Astrocyte of the cerebellum (primary cell): ENCODE measurements at regions of chr3 and their contacts with region 1.

Region 1: DNA sequence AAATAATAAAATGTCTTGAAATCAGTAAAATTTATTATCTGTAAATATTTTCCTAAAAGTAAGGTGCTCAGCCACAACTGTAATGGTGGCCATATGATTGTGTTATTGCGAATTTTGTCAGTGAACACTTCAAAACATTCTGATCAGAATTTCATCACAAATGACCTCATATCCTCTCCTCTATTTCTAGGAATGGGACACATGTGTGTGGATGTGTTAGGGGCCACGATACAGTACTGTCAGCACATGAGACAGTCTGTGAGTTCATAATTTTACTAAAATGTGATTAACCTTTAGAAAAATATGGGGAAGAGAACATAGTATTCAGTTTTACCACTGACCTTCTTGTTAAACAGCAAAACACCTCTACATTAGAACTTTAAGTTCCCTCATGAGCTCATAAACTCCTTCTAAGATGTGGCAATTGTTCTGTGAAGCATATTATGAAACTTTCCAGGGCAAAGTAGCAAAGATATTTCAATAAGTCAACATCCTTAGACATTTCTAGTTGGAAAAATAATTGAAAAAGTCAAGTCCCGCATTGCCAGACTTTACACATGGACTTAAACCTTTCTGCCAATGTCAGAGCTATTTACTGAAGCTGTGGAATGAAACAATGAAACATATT is 158.2 kb upstream of the ABI3BP start:
- DNase-seq: no peak
- H3K4me3 ChIP-seq: no peak overlapping the region
- CTCF ChIP-seq: no peak

Region 2: DNA sequence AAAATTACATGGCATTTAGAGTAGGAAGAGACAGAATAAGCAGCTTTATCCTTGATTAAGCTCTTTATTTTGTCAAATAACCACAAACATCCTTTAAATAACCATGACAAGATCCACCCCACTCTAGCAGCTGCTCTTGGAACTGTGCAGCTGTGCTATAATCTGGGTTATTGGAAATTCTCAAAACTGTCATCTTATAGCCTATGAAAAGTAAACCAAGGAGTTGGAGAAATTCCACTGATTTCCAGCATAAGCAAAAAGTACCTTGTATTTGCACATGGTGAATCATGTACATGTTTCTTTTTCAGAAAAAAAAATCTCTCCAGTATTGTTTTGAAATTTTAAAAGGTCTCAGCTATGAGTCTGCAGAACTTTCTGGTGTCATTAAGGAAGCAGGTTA is 69.4 kb before region 1 on chr3:
- in situ Hi-C with region 1: no loop called
- DNase-seq: peak; percentile 16
- H3K4me3 ChIP-seq: no peak overlapping the region
- CTCF ChIP-seq: no peak

Region 3: GRCh38 chr3:101095693-101096430 is 55.5 kb before region 1 on chr3:
- in situ Hi-C with region 1: loop called (anchors 5 kb)
- DNase-seq: no peak
- H3K4me3 ChIP-seq: no peak overlapping the region
- CTCF ChIP-seq: no peak

Region 4: DNA sequence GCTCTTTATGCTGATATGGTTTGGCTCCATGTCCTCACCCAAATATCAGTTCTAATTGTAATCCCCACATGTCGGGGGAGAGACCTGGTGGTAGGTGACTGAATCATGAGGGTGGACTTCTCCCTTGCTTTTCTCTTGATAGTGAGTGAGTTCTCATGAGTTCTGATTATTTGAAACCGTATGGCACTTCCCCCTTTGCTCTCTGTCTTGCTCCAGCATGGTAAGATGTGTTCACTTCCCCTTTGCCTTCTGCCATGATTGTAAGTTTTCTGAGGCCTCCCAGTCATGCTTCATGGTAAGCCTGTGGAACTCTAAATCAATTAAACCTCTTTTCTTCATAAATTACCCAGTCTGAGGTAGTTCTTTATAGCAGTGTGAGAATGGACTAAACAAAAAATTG is 61.3 kb after region 1 on chr3:
- in situ Hi-C with region 1: no loop called
- DNase-seq: no peak
- H3K4me3 ChIP-seq: no peak overlapping the region
- CTCF ChIP-seq: no peak